AG04450 (cell line): ENCODE measurements at regions of chr1 and their contacts with region 1.

Region 1: GRCh38 chr1:27044613-27045151 is 32.0 kb upstream of the TENT5B start:
- DNase-seq: peak; percentile 26
- H3K4me3 ChIP-seq: no peak overlapping the region
- H3K27ac ChIP-seq: no peak overlapping the region
- H3K27me3 ChIP-seq: no peaks in the 10 kb centered on the region
- CTCF ChIP-seq: peak; percentile 98

Region 2: DNA sequence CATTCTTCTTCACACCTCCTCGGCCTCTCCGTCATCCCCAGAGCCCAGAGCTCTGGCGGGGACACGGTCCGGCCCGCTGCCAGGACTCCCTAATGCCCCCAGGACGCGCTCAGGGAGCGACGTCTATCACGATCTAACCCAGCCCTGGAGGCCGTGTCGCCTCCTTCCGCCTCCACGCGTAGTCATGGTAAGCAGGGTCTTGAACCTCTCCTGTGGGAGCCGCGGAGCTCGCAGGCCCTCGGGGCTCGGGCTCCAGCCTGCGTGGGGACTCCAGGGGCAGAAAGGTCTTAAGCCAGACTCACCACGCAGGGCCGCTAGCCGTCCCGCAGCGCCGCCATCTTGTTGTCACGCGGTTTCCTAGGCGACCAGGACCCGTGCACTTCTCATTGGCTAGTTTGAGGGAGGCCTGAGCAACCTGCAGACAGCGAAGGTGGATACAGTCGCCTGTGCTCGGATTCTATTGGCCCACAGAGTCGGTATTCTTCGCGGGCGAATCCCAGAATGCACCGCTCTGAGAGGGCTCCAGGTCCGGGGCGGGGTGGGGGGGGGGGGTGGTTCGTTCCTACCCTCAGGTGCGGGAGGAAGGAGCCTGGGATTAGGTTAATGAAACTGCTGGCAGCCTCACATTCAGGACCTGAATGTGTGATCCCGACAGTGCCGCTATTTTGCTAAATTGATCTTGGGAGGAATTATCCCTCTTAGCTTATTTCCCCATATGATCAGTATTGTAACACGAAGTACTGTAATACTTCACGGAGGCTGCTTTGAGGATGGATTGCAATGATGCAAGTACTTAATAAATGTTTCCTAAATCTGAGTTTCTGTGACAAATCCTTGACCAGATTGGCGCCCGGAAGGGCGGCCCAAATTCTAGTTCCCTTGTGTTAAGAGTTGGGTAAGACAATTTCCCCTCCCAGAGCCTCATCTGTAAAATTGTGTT is 738.1 kb before region 1 on chr1 and contains the start of gene UBXN11:
- CTCF ChIA-PET with region 1: no interaction called
- POLR2A ChIA-PET with region 1: no interaction called
- DNase-seq: peak; percentile 81
- H3K4me3 ChIP-seq: peak within 1 kb of the TSS; percentile 93
- H3K27ac ChIP-seq: peak within 1 kb of the TSS; percentile 31
- H3K27me3 ChIP-seq: no peaks in the 10 kb centered on the region
- CTCF ChIP-seq: peak; percentile 4; the same call in 1 of the 2 replicates
- polyA plus RNA-seq, gene UBXN11: 6.1 and 7.0 TPM in 2 replicates

Region 3: DNA sequence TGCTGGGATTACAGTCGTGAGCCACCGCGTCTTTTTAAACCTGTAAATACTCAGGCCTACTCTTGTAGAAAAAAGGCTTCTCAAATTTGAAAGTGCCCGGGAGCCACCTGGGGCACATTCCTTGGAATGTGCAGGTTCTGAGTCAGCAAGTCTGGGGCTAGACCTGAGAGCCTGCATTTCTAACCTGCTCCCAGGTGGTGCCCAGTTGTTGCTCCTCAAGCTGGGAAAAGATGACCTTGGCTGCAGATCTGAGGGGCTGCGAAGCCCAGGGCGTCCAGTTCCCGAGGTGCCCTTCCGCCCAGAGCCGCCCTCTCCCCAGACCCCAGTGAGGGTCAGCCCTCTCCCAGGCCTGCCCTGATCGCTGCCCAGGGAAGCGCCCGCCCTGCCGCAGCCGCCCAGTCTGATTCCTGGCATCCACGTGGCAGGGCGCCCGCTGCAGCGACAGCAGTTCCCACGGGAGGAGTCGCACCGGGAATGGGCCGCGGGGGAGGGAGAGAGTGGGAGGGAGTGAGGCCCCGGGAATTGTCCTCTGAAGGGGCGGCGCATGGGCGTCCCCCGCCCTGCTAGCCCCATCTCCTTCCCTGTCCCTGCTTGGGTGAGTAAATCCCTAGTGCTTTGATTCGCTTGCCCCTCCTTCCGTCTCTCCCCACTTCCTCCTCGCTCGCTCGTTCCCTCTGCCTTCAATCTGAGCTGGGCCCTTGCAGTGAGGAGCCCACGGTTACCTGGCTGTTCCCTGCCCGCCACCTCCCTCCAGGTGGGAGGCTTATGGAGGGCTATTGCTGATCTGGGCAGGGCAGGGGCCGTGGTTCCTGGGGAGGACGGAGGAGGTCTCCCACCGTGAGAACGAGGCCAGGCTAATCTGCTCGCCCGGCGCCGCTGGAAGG is 13.2 kb before region 1 on chr1:
- CTCF ChIA-PET with region 1: interaction called, 31 read pairs
- POLR2A ChIA-PET with region 1: no interaction called
- DNase-seq: peak; percentile 34
- H3K4me3 ChIP-seq: peak overlapping the region; percentile 41
- H3K27ac ChIP-seq: peak overlapping the region; percentile 31
- H3K27me3 ChIP-seq: peaks cover 2% of the 10 kb centered on the region
- CTCF ChIP-seq: no peak

Region 4: DNA sequence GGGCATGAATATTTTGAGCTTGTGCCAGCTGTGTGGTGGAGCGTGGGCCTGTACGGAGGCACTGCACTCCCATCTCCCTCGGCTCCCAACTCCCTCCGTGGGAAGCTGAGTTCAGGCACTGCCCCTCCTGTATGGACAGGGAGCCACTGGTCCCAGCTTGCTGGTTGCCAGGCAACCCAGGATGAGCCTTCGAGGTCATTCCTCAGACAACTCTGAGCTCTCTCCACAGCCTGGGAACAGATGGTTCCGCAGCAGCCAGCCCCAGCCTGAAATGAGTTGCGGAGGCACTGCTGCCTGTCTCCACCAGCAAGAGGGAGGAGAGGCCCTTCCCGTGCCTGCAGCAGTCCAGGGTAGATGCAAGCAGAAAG is 26.4 kb after region 1 on chr1:
- CTCF ChIA-PET with region 1: interaction called, 16 read pairs
- POLR2A ChIA-PET with region 1: no interaction called
- DNase-seq: no peak
- H3K4me3 ChIP-seq: no peak overlapping the region
- H3K27ac ChIP-seq: no peak overlapping the region
- H3K27me3 ChIP-seq: peaks cover 18% of the 10 kb centered on the region
- CTCF ChIP-seq: no peak

Region 5: GRCh38 chr1:27097484-27097917 is 52.8 kb after region 1 on chr1:
- CTCF ChIA-PET with region 1: interaction called, 348 read pairs
- POLR2A ChIA-PET with region 1: interaction called, 5 read pairs
- DNase-seq: peak; percentile 44
- H3K4me3 ChIP-seq: no peak overlapping the region
- H3K27ac ChIP-seq: no peak overlapping the region
- H3K27me3 ChIP-seq: no peaks in the 10 kb centered on the region
- CTCF ChIP-seq: peak; percentile 97

Region 6: DNA sequence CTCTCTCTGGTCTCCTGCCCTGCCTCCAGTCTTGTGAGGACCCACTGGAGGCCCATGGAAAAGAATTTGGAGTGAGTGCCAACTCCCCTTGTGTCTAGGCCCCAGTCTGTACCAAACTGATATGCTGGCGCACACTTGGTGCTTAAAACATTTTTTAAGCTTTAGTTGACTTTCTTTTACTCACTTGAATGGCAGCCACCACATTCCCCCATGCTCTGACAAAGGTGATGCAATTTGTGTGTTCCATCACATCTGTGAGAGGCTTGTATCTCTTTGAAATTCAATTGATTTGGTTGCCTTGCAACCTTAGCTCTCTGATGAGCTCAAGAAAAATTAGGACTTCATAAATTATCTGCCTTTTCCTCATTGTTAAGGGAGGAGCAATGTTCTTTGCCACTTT is 159.3 kb after region 1 on chr1:
- CTCF ChIA-PET with region 1: no interaction called
- POLR2A ChIA-PET with region 1: no interaction called
- DNase-seq: no peak
- H3K4me3 ChIP-seq: no peak overlapping the region
- H3K27ac ChIP-seq: no peak overlapping the region
- H3K27me3 ChIP-seq: peaks cover 11% of the 10 kb centered on the region
- CTCF ChIP-seq: no peak

Region 7: GRCh38 chr1:27416387-27417111 is 371.9 kb after region 1 on chr1:
- CTCF ChIA-PET with region 1: interaction called, 12 read pairs
- POLR2A ChIA-PET with region 1: no interaction called
- DNase-seq: no peak
- H3K4me3 ChIP-seq: no peak overlapping the region
- H3K27ac ChIP-seq: no peak overlapping the region
- H3K27me3 ChIP-seq: no peaks in the 10 kb centered on the region
- CTCF ChIP-seq: peak; percentile 76